Dendritic cell treated with granulocyte-macrophage colony-stimulating factor and Interleukin-4, amounts not matched to agents 40 ng/mL and 50 ng/mL, for 4 days (primary cell): ENCODE measurements at regions of chr5 and their contacts with region 1.

Region 1: GRCh38 chr5:72611118-72611730 is 104.0 kb upstream of the ZNF366 start:
- H3K4me3 Mint-ChIP-seq: no peak overlapping the region
- H3K27ac Mint-ChIP-seq: no peak overlapping the region
- H3K4me1 Mint-ChIP-seq: peaks cover 6% of the 10 kb centered on the region
- H3K27me3 Mint-ChIP-seq: peaks cover 10% of the 10 kb centered on the region

Region 2: GRCh38 chr5:71492817-71493615 is 1118.2 kb before region 1 on chr5:
- intact Hi-C with region 1: no loop called
- H3K4me3 Mint-ChIP-seq: no peak overlapping the region
- H3K27ac Mint-ChIP-seq: no peak overlapping the region
- H3K4me1 Mint-ChIP-seq: no peaks in the 10 kb centered on the region
- H3K27me3 Mint-ChIP-seq: no peaks in the 10 kb centered on the region

Region 3: DNA sequence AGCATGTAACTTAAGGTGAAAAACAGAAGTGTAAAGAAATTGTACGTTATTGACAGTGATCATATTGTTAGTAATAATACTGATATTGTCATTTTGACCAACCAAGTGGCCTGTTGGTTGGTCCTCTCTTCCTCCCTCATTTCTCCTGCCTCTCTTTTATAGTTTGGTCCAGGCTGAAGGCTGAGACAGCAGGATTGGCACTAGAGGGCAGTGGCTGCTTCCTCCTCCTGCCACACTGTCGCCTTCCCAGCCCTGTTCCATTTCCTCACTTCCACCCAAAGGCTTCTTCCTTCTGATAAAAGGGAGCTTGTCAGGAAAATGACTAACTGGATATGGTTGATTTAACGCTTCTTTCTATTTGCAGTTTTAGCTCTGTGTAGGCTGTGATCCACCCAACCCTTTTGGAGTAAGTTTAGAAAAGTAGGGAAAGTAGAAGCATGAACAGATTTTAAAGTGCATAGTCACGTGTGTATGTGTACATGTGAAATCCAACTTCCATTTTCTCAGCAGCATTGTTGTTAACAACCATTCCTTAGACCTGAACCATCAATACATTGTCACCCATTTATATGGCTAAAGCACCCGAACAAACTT is 255.4 kb before region 1 on chr5:
- intact Hi-C with region 1: loop called (anchors 10 kb)
- H3K4me3 Mint-ChIP-seq: no peak overlapping the region
- H3K27ac Mint-ChIP-seq: no peak overlapping the region
- H3K4me1 Mint-ChIP-seq: peaks cover 40% of the 10 kb centered on the region
- H3K27me3 Mint-ChIP-seq: no peaks in the 10 kb centered on the region

Region 4: DNA sequence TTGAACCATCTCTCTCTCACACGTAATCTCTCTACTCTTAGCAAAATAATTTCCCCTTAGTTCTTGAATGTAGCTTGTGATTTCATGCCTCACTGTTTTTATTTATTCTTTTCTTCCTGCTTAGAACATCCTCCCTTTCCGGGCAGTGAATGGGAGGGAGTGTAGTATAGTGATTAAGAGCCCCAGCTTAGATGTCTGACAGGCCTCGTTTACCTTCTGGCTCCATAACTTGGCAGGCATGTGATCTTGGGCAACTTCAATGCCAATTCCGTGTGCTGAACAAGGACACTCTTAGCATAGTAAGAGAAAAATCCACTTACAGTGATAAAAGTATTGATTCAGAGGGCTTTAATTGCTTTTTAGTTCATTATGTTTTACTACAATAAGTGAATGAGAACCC is 109.0 kb after region 1 on chr5:
- intact Hi-C with region 1: no loop called
- H3K4me3 Mint-ChIP-seq: no peak overlapping the region
- H3K27ac Mint-ChIP-seq: no peak overlapping the region
- H3K4me1 Mint-ChIP-seq: no peaks in the 10 kb centered on the region
- H3K27me3 Mint-ChIP-seq: peaks cover 2% of the 10 kb centered on the region